ENCODE measurements at regions of chr14 and their contacts with region 1.

Region 1: GRCh38 chr14:60091550-60092530 is at the start of gene PCNX4:
- DNase-seq: peak; percentile 98
- H3K4me3 ChIP-seq: peak within 1 kb of the TSS; percentile 45 to 81 (median 55)
- H3K27ac ChIP-seq: peak within 1 kb of the TSS; percentile 93 to 99 (median 98)
- H3K4me1 ChIP-seq: peaks cover 18 to 27% of the 10 kb centered on the region in 2 donors
- H3K27me3 ChIP-seq: no peaks in the 10 kb centered on the region
- CTCF ChIP-seq: no peak
- POLR2A ChIP-seq: peak in 1 of 2 donors; percentile 98
- total RNA-seq, gene PCNX4: 63.5 to 139 (median 85.4) TPM

Region 2: DNA sequence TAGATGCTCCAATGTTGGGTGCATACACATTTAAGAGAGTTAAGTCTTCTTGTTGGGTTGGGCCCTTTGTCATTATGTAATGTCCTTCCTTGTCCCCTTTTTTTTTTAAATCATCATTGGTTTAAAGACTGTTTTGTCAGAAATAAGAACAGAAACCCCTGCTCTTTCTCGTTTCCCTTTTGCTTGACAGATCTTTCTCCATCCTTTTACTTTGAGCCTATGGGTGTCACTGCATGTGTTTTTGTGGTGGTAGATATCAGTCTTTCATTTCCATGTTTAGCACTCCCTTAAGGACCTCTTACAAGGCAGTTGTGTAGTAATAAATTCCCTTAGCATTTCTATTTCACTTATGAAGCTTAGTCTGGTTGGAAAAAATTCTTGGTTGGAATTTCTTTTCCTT is 268.7 kb before region 1 on chr14:
- intact Hi-C with region 1: no loop called
- DNase-seq: no peak
- H3K4me3 ChIP-seq: no peak overlapping the region
- H3K27ac ChIP-seq: no peak overlapping the region
- H3K4me1 ChIP-seq: no peaks in the 10 kb centered on the region
- H3K27me3 ChIP-seq: no peaks in the 10 kb centered on the region
- CTCF ChIP-seq: no peak
- POLR2A ChIP-seq: no peak

Region 3: GRCh38 chr14:60164712-60165546 is 73.1 kb after region 1 on chr14 and contains the start of gene DHRS7:
- intact Hi-C with region 1: loop called (anchors 5 kb)
- DNase-seq: peak; percentile 85 to 88
- H3K4me3 ChIP-seq: peak within 1 kb of the TSS; percentile 61 to 84 (median 76)
- H3K27ac ChIP-seq: peak within 1 kb of the TSS; percentile 97 to 98 (median 97)
- H3K4me1 ChIP-seq: peaks cover 21 to 45% of the 10 kb centered on the region in 2 donors
- H3K27me3 ChIP-seq: no peaks in the 10 kb centered on the region
- CTCF ChIP-seq: peak in 5 of 6 experiments; percentile 3 to 51 (median 33)
- POLR2A ChIP-seq: peak in 1 of 2 donors; percentile 90
- total RNA-seq, gene DHRS7: 151 to 245 (median 214) TPM

Region 4: DNA sequence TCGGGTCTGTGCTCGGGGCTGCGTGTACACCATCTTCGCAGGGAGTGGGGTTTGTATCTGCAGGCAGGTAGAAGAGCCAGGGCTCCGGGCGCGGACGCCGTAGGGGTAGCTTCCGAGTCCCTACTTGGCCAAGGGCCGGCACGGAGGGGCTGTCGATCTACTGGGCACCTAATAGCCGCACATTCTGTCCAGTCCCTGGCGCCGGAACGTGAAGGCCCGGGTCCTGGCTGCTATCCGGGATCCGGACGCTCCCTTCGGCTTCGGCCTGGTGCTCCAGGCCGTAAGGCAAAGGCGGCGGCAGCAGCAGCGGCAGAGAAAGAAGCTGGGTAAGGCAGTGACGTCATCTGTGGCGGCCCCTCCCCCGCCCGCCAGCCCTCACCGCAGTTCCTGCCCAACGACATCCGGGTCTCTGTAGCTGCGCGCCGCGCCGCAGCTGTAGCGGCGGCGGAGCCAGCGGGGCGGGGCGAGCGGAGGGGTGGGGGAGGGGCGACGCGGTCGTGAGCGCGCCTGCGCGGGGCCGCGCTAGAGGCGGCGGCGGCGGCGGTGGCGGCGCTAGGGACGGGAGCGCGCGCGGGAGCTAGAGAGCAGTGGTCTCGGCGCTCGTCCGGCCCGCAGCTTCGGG is 157.0 kb after region 1 on chr14 and contains the start of gene PPM1A:
- intact Hi-C with region 1: loop called (anchors 10 kb)
- DNase-seq: peak; percentile 93 to 96
- H3K4me3 ChIP-seq: peak within 1 kb of the TSS; percentile 62 to 86 (median 63)
- H3K27ac ChIP-seq: peak within 1 kb of the TSS; percentile 99 to 100 (median 100)
- H3K4me1 ChIP-seq: peaks cover 33 to 34% of the 10 kb centered on the region in 2 donors
- H3K27me3 ChIP-seq: no peaks in the 10 kb centered on the region
- CTCF ChIP-seq: peak in 1 of 6 experiments; percentile 18
- POLR2A ChIP-seq: peak; percentile 82 to 96
- total RNA-seq, gene PPM1A: 41.9 to 65.8 (median 44.5) TPM